Sciatic nerve (tissue), 2 donors: ENCODE measurements at regions of chr12 and their contacts with region 1.

Region 1: GRCh38 chr12:77058740-77059139 is 6.6 kb downstream of the E2F7 start:
- DNase-seq: no peak
- ATAC-seq: no peak

Region 2: GRCh38 chr12:77042833-77043232 is 15.9 kb before region 1 on chr12:
- intact Hi-C with region 1: no loop called
- DNase-seq: no peak
- ATAC-seq: no peak

Region 3: GRCh38 chr12:77122236-77122635 is 63.5 kb after region 1 on chr12:
- intact Hi-C with region 1: no loop called
- DNase-seq: no peak
- ATAC-seq: no peak

Region 4: DNA sequence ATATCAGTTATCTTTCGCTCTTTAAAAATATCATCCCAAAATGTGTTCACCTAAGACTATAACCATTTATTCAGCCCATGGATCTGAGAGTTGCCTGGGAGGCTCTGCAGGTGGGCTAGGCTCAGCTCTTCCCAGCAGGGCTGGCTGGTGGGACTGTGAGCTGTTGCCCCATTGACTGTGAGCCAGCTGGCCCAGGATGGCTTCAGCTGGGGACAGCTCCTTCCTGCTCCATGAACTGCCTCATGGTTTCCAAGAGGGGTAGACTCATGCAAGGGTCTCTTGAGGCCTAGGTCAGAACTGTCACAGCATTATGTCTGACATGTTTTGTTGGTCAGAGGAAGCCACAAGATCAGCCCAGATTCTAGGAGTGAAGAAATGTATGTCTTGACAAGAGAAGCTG is 120.8 kb after region 1 on chr12:
- intact Hi-C with region 1: no loop called
- DNase-seq: no peak
- ATAC-seq: no peak

Region 5: DNA sequence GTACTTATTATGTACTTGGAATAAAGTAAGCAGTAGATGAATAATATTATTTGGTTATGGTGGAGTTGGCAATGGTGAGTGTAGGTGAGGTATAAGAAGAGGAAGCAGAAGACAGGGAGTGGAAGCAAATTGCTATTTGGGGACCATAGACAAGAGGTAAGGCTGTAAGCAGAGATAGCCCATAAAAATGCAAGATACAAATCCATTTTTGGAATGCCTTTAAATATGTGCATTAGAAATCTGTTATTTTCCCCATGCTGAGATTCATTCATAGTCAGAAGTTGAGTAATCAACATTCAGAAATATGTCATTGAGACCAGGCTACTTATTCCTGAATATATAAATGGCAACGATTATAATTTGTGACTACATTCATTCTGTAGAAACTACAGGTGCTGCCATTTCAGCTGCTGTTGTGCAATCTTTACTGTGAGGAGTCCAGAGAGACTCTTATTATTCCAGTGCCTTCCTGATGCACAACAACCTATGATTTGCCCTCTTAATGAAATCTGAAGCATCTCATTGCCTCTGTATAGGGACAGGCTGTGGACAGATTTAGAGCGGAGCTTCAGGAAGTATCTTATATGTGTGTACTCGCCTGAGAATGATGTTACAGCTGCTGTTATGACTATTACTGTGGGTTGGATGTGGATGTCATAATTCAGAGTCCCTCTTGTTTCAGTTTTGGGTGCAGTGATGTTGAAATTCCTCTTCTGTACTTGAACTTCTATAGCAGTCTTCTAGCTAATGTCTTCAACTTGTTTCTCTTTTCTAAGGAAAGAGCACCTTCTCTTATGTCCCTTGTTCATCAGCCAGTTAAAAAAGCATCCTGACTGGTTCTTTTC is 945.7 kb after region 1 on chr12:
- intact Hi-C with region 1: loop called (anchors 5 kb)
- DNase-seq: no peak
- ATAC-seq: no peak